Activated T-helper 2 cell treated with anti-CD3 and anti-CD28 coated beads, Interferon-gamma antibody, Interleukin-2, Interleukin-4, amounts not matched to agents 10 μg/mL and 5 μg/mL and 100 μg/mL, durations not matched to agents 14 hours and 24 hours and 36 hours (primary cell): ENCODE measurements at regions of chr3 and their contacts with region 1.

Region 1: GRCh38 chr3:128725932-128726690 is at the start of gene RAB7A:
- DNase-seq: peak; percentile 94
- H3K4me3 Mint-ChIP-seq: peak within 1 kb of the TSS; percentile 90
- H3K27ac Mint-ChIP-seq: peak within 1 kb of the TSS; percentile 80
- H3K4me1 Mint-ChIP-seq: peaks cover 46% of the 10 kb centered on the region
- H3K27me3 Mint-ChIP-seq: peaks cover 3% of the 10 kb centered on the region
- total RNA-seq, gene RAB7A: 320 and 322 TPM in 2 replicates

Region 2: GRCh38 chr3:128787256-128788240 is 61.4 kb after region 1 on chr3:
- intact Hi-C with region 1: loop called (anchors 1 kb)
- DNase-seq: no peak
- H3K4me3 Mint-ChIP-seq: peak overlapping the region; percentile 73
- H3K27ac Mint-ChIP-seq: peak overlapping the region; percentile 96
- H3K4me1 Mint-ChIP-seq: peaks cover 66% of the 10 kb centered on the region
- H3K27me3 Mint-ChIP-seq: no peaks in the 10 kb centered on the region